Thyroid gland (tissue), 4 donors: ENCODE measurements at regions of chr11 and their contacts with region 1.

Region 1: GRCh38 chr11:126303623-126304456 is at the start of gene DCPS:
- DNase-seq: peak; percentile 86 to 89
- H3K4me3 ChIP-seq: peak within 1 kb of the TSS; percentile 47 to 84 (median 52)
- H3K27ac ChIP-seq: peak within 1 kb of the TSS; percentile 34 to 84 (median 77)
- H3K4me1 ChIP-seq: peaks cover 6% of the 10 kb centered on the region in 2 donors
- H3K27me3 ChIP-seq: no peaks in the 10 kb centered on the region
- CTCF ChIP-seq: no peak
- POLR2A ChIP-seq: peak; percentile 25 to 73
- total RNA-seq, gene DCPS: 6.1 to 18.9 (median 13.9) TPM

Region 2: DNA sequence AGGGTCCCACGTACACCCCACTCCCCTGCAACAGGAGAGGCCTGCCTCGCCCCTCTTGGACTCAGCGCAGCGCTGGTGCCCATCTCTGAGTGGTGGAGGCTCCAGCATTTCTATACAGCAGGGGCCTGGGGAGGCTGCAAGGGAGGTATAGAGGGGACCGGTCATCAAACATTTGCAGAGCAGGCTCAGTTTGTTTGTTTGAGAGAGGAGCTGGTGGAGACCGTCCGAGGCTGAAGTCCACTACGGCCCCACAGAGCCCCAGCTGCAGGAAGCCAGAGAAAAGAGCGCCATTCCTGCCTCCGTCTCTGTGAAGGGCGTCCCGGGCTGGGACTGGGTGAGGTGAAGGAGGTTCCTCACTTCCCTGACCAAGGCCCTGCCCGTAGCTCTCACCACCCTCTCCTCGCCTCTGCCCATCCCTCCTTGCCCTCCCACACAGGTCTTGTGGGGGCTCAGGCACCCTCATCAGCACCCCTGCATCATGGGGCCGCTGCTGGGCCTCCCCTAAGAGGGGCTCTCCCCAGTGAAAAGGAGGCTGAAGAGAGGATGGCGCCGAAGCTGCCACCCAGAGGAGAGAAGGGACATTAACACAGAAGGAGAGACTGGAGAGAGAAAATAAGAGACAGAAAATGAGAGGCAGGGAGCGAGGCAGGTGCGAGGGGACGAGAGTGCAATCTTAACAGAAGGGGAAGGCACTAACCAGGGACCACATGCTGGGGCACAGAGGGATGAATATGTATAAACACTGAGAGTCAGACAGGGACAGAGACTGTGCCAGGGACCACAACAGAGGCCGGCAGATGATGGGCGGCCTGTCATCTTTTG is 116.9 kb before region 1 on chr11:
- intact Hi-C with region 1: no loop called
- DNase-seq: peak in 1 of 2 donors; percentile 18
- H3K4me3 ChIP-seq: no peak overlapping the region
- H3K27ac ChIP-seq: peak overlapping the region; percentile 53 to 89 (median 76)
- H3K4me1 ChIP-seq: peaks cover 15 to 22% of the 10 kb centered on the region in 2 donors
- H3K27me3 ChIP-seq: no peaks in the 10 kb centered on the region
- CTCF ChIP-seq: peak in 4 of 6 experiments; percentile 18 to 54 (median 30)
- POLR2A ChIP-seq: no peak

Region 3: GRCh38 chr11:126592496-126593410 is 288.9 kb after region 1 on chr11:
- intact Hi-C with region 1: loop called (anchors 5 kb)
- DNase-seq: no peak
- H3K4me3 ChIP-seq: no peak overlapping the region
- H3K27ac ChIP-seq: no peak overlapping the region
- H3K4me1 ChIP-seq: peaks cover 8 to 22% of the 10 kb centered on the region in 2 donors
- H3K27me3 ChIP-seq: no peaks in the 10 kb centered on the region
- CTCF ChIP-seq: no peak
- POLR2A ChIP-seq: no peak